BJ (cell line): ENCODE measurements at regions of chr3 and their contacts with region 1.

Region 1: DNA sequence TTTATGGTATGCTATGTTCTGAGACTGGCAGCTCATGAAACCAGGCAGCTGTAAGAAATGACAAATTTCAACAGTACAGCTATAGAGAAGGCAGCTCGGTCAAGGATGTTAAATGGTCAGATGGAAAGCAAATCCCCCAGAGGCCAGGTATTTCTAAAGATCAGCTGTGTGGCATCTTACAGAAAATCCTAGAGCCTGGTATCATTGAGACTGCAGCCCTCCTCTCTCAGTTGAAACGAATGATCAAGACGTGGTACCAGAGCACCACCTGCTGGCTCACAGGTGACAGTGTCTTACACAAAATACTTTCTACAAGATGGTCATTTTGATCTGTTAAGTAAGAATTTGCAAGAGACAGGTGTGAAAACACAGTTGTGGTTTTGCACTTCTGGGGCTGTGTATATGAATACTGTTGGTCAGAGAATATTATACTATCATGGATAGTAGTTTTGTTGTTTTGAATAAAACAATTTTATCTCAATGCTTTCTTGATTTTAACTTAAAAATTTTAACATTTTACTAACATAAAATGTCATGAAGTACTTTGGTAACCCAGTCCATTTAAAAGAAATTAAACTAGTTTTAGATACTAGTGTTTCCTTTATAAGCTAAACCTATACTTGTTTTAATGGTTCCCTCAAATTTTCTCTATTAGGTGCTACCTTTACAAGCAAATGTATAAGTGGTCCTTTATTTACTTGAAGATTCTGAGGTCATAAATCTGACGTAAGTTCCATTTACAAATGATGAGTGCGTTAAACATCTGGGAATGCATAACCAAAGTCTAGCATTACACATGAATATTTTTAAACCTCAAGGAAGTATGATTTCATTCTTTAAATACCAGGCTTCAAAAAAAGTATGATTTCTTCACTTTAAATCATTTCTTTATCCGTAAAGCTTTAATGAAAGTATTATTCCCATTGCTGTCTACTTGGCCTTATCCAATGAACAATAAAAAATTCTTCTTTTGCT is 121.8 kb downstream of the PDZRN3 start:
- DNase-seq: peak; percentile 83
- H3K4me3 ChIP-seq: no peak overlapping the region
- H3K27me3 ChIP-seq: no peaks in the 10 kb centered on the region
- CTCF ChIP-seq: peak; percentile 82

Region 2: GRCh38 chr3:73094951-73095350 is 407.9 kb before region 1 on chr3:
- CTCF ChIA-PET with region 1: interaction called, 57 read pairs
- POLR2A ChIA-PET with region 1: no interaction called
- DNase-seq: no peak
- H3K4me3 ChIP-seq: no peak overlapping the region
- H3K27me3 ChIP-seq: 0 out of 2 replicates have a peak, but pooled peaks cover 3% of the 10 kb centered on the region
- CTCF ChIP-seq: no peak

Region 3: DNA sequence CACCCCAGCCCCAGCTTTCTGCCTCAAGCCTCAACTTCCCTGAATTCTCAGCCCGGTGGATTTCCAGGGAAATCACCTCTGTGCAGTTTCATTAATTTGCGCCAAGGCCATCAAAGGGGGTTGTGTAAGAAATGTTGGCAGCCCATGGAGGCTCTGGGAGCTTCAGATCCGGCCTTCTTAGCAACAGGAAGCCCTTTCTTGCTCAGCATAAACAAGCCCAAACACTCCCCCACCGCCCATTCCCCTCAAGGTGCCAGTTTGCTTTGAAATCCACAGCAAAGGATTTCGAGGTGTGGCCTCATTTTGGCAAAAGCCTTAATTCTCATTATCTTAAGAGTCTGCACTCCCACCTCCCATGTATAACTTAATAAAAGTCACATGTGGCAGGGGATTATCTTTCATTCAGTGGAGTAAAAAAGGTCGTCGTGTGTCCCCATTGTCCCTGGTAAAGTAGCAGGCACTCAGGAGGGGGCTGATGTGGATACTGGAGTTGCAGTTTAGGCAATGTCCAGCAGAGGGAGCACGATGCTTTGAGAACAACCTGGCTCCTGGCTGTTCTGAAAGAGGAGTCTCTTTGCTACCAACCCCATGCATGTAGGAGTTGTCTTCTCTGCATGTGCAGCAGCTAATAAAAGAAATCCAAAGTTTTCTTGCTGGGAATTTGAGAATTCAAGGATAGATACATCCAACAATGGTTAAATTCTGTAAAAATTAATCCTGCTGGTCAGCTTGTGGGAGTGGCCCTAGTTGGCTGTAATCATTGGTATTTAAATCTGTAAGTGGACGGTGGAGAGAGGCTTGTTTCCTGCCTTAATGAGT is 401.9 kb before region 1 on chr3:
- CTCF ChIA-PET with region 1: interaction called, 57 read pairs
- POLR2A ChIA-PET with region 1: no interaction called
- DNase-seq: peak; percentile 10
- H3K4me3 ChIP-seq: no peak overlapping the region
- H3K27me3 ChIP-seq: peaks cover 6% of the 10 kb centered on the region; the same call in 1 of the 2 replicates
- CTCF ChIP-seq: peak; percentile 91

Region 4: DNA sequence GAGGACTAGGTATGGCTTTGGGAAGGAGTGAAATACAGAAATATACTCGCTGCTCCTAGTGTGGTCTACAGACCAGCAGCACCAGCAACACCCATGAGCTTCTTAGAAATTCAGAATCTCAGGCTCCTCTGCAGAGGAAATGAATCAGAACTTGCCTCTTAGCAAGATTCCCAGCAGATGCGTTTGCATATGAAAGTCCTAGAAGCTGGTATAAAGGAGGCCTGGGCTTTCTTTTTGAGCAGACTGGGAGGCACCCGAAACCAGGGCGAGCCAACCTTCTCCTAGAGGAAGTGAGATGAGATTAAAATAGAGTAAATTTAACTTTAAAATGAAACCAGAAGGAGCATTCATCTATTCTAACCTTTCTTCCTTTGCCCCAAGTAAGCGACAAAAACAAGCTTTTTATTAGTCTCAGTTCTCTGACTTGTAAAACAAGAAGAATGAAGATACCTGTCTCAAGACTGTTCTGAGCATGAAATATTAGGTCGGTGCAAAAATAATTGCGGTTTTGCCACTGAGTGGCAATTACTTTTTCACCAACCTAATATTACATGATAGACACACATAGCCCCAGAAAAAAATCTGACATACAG is 18.1 kb before region 1 on chr3:
- CTCF ChIA-PET with region 1: interaction called, 16 read pairs
- POLR2A ChIA-PET with region 1: no interaction called
- DNase-seq: no peak
- H3K4me3 ChIP-seq: no peak overlapping the region
- H3K27me3 ChIP-seq: no peaks in the 10 kb centered on the region
- CTCF ChIP-seq: no peak